Activated T-helper 2 cell treated with anti-CD3 and anti-CD28 coated beads, Interferon-gamma antibody, Interleukin-2, Interleukin-4, amounts not matched to agents 10 μg/mL and 5 μg/mL and 100 μg/mL, durations not matched to agents 14 hours and 24 hours and 36 hours (primary cell): ENCODE measurements at regions of chr22 and their contacts with region 1.

Region 1: GRCh38 chr22:25081409-25081824 is 118.2 kb upstream of the CRYBB3 start:
- DNase-seq: peak; percentile 32
- H3K4me3 Mint-ChIP-seq: no peak overlapping the region
- H3K27ac Mint-ChIP-seq: peak overlapping the region; percentile 62
- H3K4me1 Mint-ChIP-seq: peaks cover 67% of the 10 kb centered on the region
- H3K27me3 Mint-ChIP-seq: no peaks in the 10 kb centered on the region

Region 2: DNA sequence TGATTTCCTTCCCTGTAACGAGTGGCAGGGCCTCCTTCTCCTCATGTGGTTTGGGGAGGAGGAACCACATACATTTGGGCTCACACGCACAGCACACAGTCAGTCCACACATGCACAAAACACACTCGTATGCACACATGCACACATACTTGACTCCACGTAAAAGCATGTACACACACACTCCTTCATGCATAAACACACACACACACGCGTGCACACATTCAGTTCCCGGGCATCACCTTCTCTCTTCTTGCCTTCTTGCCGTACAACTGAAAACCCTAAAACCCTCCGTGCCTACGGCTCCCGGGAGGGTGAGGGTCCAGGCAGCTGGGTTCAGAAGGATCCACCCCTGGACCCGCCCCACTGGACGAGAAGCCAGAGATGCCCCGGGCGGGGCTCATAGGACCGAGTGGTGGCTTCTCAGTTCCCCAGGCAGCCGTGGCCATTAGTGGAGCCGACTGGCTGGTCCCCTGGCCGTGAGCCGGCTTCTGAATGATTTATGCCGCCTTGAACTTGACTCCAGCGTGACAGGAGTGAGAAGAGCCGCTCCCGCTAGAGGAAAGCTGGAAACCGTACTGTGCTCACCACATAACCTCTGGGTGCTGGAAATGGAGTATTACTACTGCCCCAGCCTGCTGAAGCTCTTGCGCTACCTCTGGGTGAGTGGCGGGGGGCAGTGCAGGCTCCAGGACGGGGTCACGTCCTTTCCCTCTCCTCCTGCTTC is 11.5 kb before region 1 on chr22:
- intact Hi-C with region 1: loop called (anchors 1 kb)
- DNase-seq: peak; percentile 22
- H3K4me3 Mint-ChIP-seq: peak overlapping the region; percentile 84
- H3K27ac Mint-ChIP-seq: peak overlapping the region; percentile 95
- H3K4me1 Mint-ChIP-seq: peaks cover 65% of the 10 kb centered on the region
- H3K27me3 Mint-ChIP-seq: no peaks in the 10 kb centered on the region

Region 3: DNA sequence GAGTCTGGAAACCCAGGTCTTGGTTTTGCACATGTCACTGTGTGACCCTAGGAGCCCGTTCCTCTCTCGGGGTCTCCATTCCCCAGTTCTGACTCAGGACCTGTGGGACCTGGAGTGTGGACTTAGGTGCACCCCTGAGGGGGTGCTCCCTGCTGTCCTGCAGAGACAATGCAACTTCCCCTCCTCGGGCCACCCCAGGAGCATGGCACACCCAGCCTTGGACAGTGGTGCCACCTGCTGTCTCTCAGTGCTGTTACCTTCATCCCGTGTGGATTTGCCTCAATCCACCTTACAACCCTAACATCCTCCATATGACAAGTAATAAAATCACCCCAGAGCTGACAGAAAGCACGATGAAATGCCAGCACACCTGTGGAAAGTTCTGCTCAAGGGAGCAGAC is 90.7 kb after region 1 on chr22:
- intact Hi-C with region 1: loop called (anchors 5 kb)
- DNase-seq: no peak
- H3K4me3 Mint-ChIP-seq: no peak overlapping the region
- H3K27ac Mint-ChIP-seq: no peak overlapping the region
- H3K4me1 Mint-ChIP-seq: no peaks in the 10 kb centered on the region
- H3K27me3 Mint-ChIP-seq: no peaks in the 10 kb centered on the region